ENCODE measurements at regions of chr4 and their contacts with region 1.

Region 1: GRCh38 chr4:38759113-38759789 is 23.5 kb downstream of the TLR10 start:
- DNase-seq: no peak
- ATAC-seq: no peak
- H3K4me3 Mint-ChIP-seq: peak overlapping the region; percentile 4
- H3K27ac Mint-ChIP-seq: peak overlapping the region; percentile 80
- H3K4me1 Mint-ChIP-seq: peaks cover 70% of the 10 kb centered on the region
- H3K27me3 Mint-ChIP-seq: no peaks in the 10 kb centered on the region
- CTCF ChIP-seq: no peak

Region 2: DNA sequence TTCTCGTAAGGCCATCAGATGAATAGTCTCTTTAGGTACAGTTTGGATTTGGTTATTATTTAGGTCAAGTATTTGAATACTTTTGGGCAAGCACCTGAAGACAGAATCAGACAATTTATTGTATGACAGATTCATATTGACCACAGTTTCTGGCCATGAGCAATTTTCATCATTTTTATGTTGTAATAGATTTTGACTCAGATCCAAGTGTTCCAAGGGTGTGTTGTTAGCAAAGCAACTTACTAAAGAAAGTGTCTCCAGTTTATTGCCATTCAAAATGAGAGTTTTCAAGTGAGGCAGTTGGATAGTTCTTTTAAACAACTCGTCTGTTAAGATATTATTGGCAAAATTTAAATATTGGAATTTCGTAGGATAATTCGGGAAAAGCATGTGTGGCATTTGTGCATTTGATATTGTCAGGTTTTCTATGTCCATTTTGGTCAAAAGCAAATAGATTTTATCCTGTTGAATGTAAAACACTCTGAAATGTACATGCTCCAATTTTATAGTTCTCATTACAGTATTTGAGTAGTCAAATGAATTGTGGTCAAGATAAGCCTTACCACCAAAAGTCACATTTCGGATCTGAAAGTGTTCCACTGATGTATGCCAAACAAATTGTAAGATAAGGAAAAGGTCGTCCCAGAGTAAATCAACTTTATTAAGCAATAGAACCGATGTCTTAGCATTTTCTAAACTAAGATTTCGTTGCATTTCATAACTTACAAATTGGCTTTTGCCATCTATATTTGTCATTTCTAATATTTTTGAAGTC is 15.1 kb after region 1 on chr4:
- CTCF ChIA-PET with region 1: interaction called, 331 read pairs
- POLR2A ChIA-PET with region 1: interaction called, 249 read pairs
- intact Hi-C with region 1: loop called (anchors 1 kb)
- DNase-seq: no peak
- ATAC-seq: no peak
- H3K4me3 Mint-ChIP-seq: no peak overlapping the region
- H3K27ac Mint-ChIP-seq: peak overlapping the region; percentile 50
- H3K4me1 Mint-ChIP-seq: peaks cover 78% of the 10 kb centered on the region
- H3K27me3 Mint-ChIP-seq: no peaks in the 10 kb centered on the region
- CTCF ChIP-seq: no peak

Region 3: DNA sequence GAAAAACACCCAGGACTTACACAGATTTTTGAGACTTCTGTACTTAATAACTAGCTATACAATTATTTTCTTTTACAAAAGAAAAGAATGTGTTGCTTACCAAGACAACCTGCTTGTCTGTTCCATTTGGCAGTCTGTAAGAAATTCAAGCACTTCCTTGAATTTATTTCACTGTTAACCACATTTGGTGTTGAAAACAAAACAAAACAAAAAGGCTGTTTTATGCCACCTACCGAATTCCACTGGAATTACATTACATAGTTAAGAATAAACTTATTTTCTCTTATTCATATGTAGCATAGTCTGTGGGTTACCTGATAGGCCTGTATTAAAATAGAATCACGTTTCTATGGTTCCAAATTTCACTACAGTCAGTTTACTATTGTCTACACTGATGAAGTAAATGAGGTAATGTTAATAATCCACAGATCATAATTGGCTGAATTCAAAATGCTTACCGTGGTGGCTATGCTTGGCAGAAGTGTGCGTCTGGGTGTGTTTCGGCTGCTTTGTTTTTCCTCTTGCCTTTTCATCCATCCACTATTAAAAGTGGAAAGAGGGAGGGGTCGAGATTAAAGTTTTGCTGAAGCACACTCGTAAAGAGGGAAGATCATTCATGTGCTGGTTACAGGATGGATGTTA is 45.5 kb after region 1 on chr4 and contains the start of gene TLR1:
- CTCF ChIA-PET with region 1: interaction called, 84 read pairs
- POLR2A ChIA-PET with region 1: interaction called, 140 read pairs
- intact Hi-C with region 1: loop called (anchors 1 kb)
- DNase-seq: no peak
- ATAC-seq: peak; percentile 45
- H3K4me3 Mint-ChIP-seq: peak within 1 kb of the TSS; percentile 86
- H3K27ac Mint-ChIP-seq: peak within 1 kb of the TSS; percentile 93
- H3K4me1 Mint-ChIP-seq: peaks cover 68% of the 10 kb centered on the region
- H3K27me3 Mint-ChIP-seq: no peaks in the 10 kb centered on the region
- CTCF ChIP-seq: peak; percentile 54
- total RNA-seq, gene TLR1: 39.6 and 43.0 TPM in 2 replicates

Region 4: GRCh38 chr4:38872604-38873006 is 113.4 kb after region 1 on chr4:
- CTCF ChIA-PET with region 1: interaction called, 14 read pairs
- POLR2A ChIA-PET with region 1: interaction called, 9 read pairs
- intact Hi-C with region 1: no loop called
- DNase-seq: no peak
- ATAC-seq: no peak
- H3K4me3 Mint-ChIP-seq: no peak overlapping the region
- H3K27ac Mint-ChIP-seq: no peak overlapping the region
- H3K4me1 Mint-ChIP-seq: peaks cover 11% of the 10 kb centered on the region
- H3K27me3 Mint-ChIP-seq: no peaks in the 10 kb centered on the region
- CTCF ChIP-seq: no peak

Region 5: DNA sequence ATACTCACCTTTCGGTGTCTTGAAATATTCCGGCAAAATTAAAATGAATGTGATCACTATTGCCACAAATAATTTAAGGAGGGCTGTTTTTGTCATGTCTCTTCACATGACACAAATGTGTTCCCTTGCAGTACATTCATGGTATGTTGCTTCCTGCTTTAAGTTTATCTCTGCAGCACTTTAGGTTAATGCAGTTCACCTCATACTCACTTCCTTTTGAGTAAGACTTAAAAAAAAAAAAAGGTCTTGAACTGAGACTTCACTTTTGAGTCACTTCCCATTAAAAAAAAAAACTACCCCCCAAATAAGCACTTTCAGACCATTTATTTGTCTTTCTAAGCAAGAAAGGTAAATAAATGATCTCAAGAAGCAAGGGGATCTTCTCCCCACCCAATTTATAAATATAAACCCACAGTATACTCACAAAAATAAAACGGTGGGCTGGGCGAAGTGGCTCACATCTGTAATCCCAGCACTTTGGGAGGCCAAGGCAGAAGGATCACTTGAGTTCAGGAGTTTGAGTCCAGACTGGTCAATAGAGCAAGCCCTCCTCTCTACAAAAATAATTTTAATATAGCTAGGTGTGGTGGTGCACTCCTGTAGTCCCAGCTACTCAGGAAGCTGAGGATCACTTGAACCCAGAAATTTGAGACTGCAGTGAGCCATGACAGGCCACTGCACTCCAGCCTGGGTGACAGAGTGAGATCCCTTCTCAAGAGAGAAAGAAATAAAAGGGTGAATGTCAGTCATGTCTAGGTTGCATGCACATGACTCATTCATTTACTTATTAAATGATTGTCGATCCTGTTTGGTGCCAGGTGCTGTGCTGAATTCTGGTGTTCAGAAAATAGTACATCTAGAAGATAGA is 273.2 kb after region 1 on chr4 and contains the start of gene TMEM156:
- CTCF ChIA-PET with region 1: no interaction called
- POLR2A ChIA-PET with region 1: interaction called, 3 read pairs
- intact Hi-C with region 1: loop called (anchors 2 kb)
- DNase-seq: no peak
- ATAC-seq: peak; percentile 69
- H3K4me3 Mint-ChIP-seq: peak within 1 kb of the TSS; percentile 83
- H3K27ac Mint-ChIP-seq: peak within 1 kb of the TSS; percentile 93
- H3K4me1 Mint-ChIP-seq: peaks cover 64% of the 10 kb centered on the region
- H3K27me3 Mint-ChIP-seq: no peaks in the 10 kb centered on the region
- CTCF ChIP-seq: no peak
- total RNA-seq, gene TMEM156: 26.0 and 29.5 TPM in 2 replicates

Region 6: DNA sequence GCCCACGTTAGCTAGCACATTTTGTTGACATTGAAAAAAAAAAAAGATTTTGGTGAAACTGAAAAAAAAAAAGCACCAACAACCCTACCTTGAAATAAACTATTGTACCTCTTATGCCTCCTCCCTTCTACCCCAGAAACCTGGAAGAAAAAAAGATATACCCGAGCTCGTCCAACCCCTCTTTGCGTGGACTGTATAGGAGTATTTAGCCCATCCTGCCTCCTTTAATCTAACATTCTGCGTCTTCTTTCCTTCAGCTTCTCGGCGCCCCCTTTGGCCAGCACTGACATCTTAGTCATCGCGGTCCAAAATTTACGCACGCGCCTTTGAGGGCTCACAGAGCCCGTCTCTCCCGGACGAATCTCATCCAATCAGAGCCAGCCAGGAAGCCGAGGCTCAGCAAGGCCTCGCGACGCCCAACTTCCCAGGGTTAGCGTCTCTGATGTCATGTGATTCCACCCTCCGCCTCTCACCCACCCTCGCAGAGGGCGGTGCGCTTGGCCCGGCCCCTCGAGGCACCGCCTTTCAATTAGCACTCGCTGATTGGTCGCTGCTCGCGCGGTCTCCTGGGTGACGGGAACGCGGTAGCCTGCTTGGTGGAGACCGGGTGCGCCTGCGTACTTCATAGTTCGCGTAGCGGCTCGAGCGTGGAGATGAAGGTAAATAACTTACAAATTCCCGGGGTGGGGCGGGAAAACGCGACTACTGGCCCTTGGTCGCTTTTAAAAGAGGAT is 422.8 kb after region 1 on chr4 and contains the start of gene WDR19:
- CTCF ChIA-PET with region 1: interaction called, 4 read pairs
- POLR2A ChIA-PET with region 1: interaction called, 8 read pairs
- intact Hi-C with region 1: loop called (anchors 1 kb)
- DNase-seq: peak; percentile 93
- ATAC-seq: peak; percentile 97
- H3K4me3 Mint-ChIP-seq: no peak within 1 kb of the TSS
- H3K27ac Mint-ChIP-seq: peak within 1 kb of the TSS; percentile 46
- H3K4me1 Mint-ChIP-seq: peaks cover 7% of the 10 kb centered on the region
- H3K27me3 Mint-ChIP-seq: no peaks in the 10 kb centered on the region
- CTCF ChIP-seq: no peak
- total RNA-seq, gene WDR19: 23.8 and 28.4 TPM in 2 replicates

Measured in activated B cell treated with CpG ODN at 0.5 μM for 24 hours (primary cell).